Activated CD4-positive, alpha-beta memory T cell treated with anti-CD3 and anti-CD28 coated beads for 36 hours (primary cell): ENCODE measurements at regions of chr15 and their contacts with region 1.

Region 1: GRCh38 chr15:89406940-89407607 is 72.5 kb upstream of the POLG start:
- DNase-seq: no peak
- H3K4me3 Mint-ChIP-seq: peak overlapping the region; percentile 8
- H3K27ac Mint-ChIP-seq: no peak overlapping the region
- H3K4me1 Mint-ChIP-seq: peaks cover 41% of the 10 kb centered on the region
- H3K27me3 Mint-ChIP-seq: peaks cover 87% of the 10 kb centered on the region

Region 2: DNA sequence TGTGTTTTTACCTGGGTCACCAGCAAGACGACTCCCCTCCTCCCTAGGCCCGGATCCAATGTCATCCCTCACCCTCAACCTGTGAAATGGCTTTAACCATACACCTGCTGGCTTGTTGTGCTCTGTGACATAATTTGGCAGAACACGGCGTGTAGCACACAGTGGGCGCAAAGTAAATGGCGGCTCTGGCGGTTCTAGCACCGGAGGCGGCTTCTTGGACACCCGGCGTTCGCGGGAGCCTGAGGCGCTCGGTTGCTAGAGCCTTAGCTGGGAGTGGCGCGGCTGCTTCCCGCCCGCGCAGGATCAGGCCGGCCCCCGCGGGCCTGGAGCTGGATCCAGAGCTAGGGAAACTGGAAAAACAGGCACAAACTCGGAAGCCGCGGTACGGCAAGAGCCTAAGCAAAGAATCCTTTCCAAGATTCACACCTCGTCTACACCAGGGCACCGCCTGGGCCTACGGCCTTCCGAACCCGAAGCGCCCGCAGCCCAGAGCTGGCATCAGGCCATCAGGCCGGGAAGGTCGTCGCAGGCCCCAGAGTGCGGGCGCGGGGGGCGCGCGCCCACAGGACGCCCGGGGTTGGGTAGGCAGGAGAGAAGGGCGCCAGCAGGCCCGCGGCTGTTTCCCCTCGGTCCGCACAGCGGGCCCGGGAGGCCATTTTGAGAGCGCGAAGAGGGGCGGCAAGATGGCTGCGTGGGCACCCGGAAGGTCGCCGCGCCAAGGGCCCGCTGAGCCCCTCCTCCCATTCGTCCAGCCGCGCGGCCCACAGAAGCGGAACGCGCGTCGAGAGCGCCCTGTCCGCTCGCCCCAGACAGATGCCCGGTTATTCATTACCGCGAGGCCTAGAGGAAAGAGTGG is 28.6 kb before region 1 on chr15:
- CTCF ChIA-PET with region 1: interaction called, 4 read pairs
- POLR2A ChIA-PET with region 1: no interaction called
- intact Hi-C with region 1: loop called (anchors 2 kb)
- DNase-seq: no peak
- H3K4me3 Mint-ChIP-seq: peak overlapping the region; percentile 64
- H3K27ac Mint-ChIP-seq: peak overlapping the region; percentile 59
- H3K4me1 Mint-ChIP-seq: peaks cover 4% of the 10 kb centered on the region
- H3K27me3 Mint-ChIP-seq: peaks cover 74% of the 10 kb centered on the region

Region 3: GRCh38 chr15:89389841-89390603 is 17.1 kb before region 1 on chr15:
- CTCF ChIA-PET with region 1: no interaction called
- POLR2A ChIA-PET with region 1: no interaction called
- intact Hi-C with region 1: no loop called
- DNase-seq: no peak
- H3K4me3 Mint-ChIP-seq: no peak overlapping the region
- H3K27ac Mint-ChIP-seq: no peak overlapping the region
- H3K4me1 Mint-ChIP-seq: no peaks in the 10 kb centered on the region
- H3K27me3 Mint-ChIP-seq: peaks cover 14% of the 10 kb centered on the region